Mucosa of descending colon (tissue), 3 donors: ENCODE measurements at regions of chr14 and their contacts with region 1.

Region 1: DNA sequence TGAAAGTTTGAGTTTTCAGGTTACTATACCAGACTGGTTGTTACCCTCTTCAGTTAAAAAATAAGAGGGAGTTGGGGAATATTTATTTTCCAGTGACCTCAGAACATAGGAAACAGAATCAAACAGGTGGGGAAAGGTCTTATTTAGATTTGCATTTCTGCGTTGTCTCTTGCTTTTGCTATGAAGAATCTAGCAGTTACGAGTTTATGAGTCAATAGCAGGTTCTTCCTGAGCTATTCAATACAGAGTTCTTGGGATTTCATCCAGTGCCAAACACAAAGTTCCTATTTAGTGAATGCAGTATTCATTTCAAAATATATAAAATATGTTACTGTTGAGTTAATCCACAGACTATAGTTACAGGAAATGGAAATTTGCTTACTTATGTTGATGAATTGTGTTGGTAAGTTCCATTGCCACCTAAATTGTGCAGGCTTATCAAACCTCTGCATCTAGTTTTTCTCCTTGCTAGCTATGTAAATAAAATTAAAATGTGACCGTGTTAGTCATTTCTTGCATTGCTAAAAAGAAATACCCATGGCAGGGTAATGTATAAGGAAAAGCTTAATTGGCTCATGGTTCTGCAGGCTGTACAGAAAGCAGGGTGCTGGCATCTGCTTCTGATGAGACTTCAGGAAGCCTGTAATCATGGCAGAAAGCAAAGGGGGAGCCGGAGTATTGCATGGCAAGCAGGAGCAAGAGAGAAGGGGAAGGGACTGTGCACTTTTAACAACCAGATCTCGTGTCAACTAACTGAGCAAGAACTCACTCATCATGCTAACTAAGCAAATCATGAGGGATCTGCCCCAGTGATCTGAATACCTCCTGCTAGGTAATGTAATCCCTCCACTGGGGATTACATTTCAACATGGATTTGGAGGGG is 110.2 kb downstream of the KTN1 start:
- DNase-seq: no peak
- ATAC-seq: no peak
- H3K4me3 ChIP-seq: no peak overlapping the region
- H3K4me1 ChIP-seq: no peaks in the 10 kb centered on the region
- CTCF ChIP-seq: no peak

Region 2: DNA sequence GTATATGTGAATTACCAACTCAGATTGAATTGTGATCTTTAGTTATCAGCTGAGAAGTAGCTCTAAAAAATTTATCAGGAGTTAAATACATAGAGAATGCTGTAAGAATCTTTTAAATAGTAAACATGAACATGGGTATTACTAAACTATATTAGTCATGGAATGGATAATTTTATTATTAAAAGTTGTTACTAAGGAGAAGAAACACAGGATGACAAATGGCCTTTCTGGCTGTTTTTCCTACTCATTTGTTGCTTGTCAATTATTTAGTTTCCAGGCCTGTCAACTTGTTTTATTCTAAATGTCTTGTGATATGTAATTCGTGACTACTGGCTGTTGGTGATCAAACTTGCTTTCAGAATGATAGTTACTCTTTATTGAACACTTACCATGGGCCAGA is 51.6 kb before region 1 on chr14:
- intact Hi-C with region 1: no loop called
- DNase-seq: no peak
- ATAC-seq: no peak
- H3K4me3 ChIP-seq: no peak overlapping the region
- H3K4me1 ChIP-seq: no peaks in the 10 kb centered on the region
- CTCF ChIP-seq: no peak

Region 3: GRCh38 chr14:55780156-55780946 is 90.1 kb after region 1 on chr14:
- intact Hi-C with region 1: no loop called
- DNase-seq: no peak
- ATAC-seq: no peak
- H3K4me3 ChIP-seq: no peak overlapping the region
- H3K4me1 ChIP-seq: no peaks in the 10 kb centered on the region
- CTCF ChIP-seq: no peak

Region 4: GRCh38 chr14:56474419-56475022 is 784.3 kb after region 1 on chr14:
- intact Hi-C with region 1: loop called in 1 of 2 experiments (anchors 10 kb)
- DNase-seq: peak in 1 of 3 donors; percentile 26
- ATAC-seq: peak; percentile 52
- H3K4me3 ChIP-seq: no peak overlapping the region
- H3K4me1 ChIP-seq: no peaks in the 10 kb centered on the region
- CTCF ChIP-seq: peak; percentile 59